T-cell (primary cell): ENCODE measurements at regions of chrX and their contacts with region 1.

Region 1: GRCh38 chrX:154717824-154718223 is 33.1 kb downstream of the GAB3 start:
- DNase-seq: peak in 10 of 35 experiments; percentile 15 to 66 (median 24)
- ATAC-seq: peak in 2 of 4 experiments; percentile 21 to 62
- H3K4me3 ChIP-seq: peak overlapping the region in 1 of 2 donors; percentile 25
- H3K4me3 Mint-ChIP-seq: peak overlapping the region; percentile 34 to 78 (median 60)
- H3K27ac ChIP-seq: peak overlapping the region; percentile 73
- H3K27ac Mint-ChIP-seq: peak overlapping the region; percentile 82 to 89
- H3K4me1 ChIP-seq: peaks cover 11 to 49% of the 10 kb centered on the region in 2 experiments
- H3K4me1 Mint-ChIP-seq: peaks cover 42 to 73% (median 49%) of the 10 kb centered on the region in 3 donors
- H3K27me3 ChIP-seq: no peaks in the 10 kb centered on the region
- H3K27me3 Mint-ChIP-seq: peaks cover 0 to 10% of the 10 kb centered on the region in 2 donors

Region 2: GRCh38 chrX:152958524-152959465 is 1759.0 kb before region 1 on chrX:
- CTCF ChIA-PET with region 1: no interaction called
- POLR2A ChIA-PET with region 1: no interaction called
- DNase-seq: peak; percentile 79 to 95 (median 87)
- ATAC-seq: peak; percentile 98 to 99 (median 98)
- H3K4me3 ChIP-seq: peak overlapping the region; percentile 27 to 28
- H3K4me3 Mint-ChIP-seq: peak overlapping the region; percentile 70 to 75 (median 71)
- H3K27ac ChIP-seq: peak overlapping the region; percentile 71
- H3K27ac Mint-ChIP-seq: peak overlapping the region; percentile 88 to 91
- H3K4me1 ChIP-seq: peaks cover 0 to 12% of the 10 kb centered on the region in 2 experiments
- H3K4me1 Mint-ChIP-seq: peaks cover 9 to 15% (median 14%) of the 10 kb centered on the region in 3 donors
- H3K27me3 ChIP-seq: no peaks in the 10 kb centered on the region
- H3K27me3 Mint-ChIP-seq: peaks cover 0 to 19% of the 10 kb centered on the region in 2 donors

Region 3: DNA sequence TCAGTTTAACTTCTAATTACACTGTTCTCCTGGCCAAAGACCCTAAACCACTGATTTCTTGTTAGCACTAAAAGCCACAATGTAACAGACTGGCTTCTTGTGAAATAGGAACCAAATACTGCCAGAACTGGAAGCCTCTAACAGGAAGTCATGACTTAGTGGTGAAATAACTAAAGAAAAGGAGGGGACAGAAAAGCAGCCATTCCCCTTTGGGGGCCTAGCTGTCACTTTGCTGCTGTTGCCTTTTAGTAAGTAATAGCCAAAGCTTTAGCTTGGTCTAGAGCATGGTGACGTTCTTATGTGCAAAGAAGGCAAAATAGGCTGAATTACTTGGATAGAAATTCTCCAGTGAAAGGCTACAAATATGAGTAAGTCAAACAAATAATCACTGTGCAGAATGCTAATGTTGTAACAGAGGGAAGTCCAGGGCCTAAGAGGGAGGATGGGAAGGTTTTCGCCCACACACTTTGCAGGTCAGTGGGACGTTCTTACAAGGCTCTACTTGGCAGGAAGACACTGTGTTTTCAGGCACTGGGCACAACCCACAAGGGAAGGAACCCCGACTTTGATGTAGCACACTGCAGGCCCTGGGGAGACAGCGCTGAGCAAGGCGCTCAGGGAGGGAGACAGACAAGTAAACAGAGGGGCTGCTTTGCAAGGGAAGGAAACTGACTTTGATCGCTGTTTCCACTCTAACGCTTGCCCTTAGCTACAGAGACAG is 16.4 kb after region 1 on chrX:
- CTCF ChIA-PET with region 1: interaction called in 1 of 2 experiments, 17 read pairs
- POLR2A ChIA-PET with region 1: interaction called in 1 of 2 experiments, 3 read pairs
- DNase-seq: peak in 16 of 35 experiments; percentile 4 to 60 (median 22)
- ATAC-seq: peak; percentile 73 to 81 (median 80)
- H3K4me3 ChIP-seq: peak overlapping the region in 1 of 2 donors; percentile 31
- H3K4me3 Mint-ChIP-seq: peak overlapping the region; percentile 51 to 68 (median 59)
- H3K27ac ChIP-seq: peak overlapping the region; percentile 78
- H3K27ac Mint-ChIP-seq: peak overlapping the region; percentile 95 to 96
- H3K4me1 ChIP-seq: peaks cover 17 to 67% of the 10 kb centered on the region in 2 experiments
- H3K4me1 Mint-ChIP-seq: peaks cover 73 to 96% (median 89%) of the 10 kb centered on the region in 3 donors
- H3K27me3 ChIP-seq: no peaks in the 10 kb centered on the region
- H3K27me3 Mint-ChIP-seq: peaks cover 0 to 26% of the 10 kb centered on the region in 2 donors